ENCODE measurements at regions of chr3 and their contacts with region 1.

Region 1: GRCh38 chr3:62065982-62066693 is 307.2 kb downstream of the FEZF2 start:
- DNase-seq: no peak
- ATAC-seq: no peak
- H3K4me3 ChIP-seq: no peak overlapping the region
- H3K27ac ChIP-seq: no peak overlapping the region
- H3K4me1 ChIP-seq: no peaks in the 10 kb centered on the region
- H3K27me3 ChIP-seq: no peaks in the 10 kb centered on the region
- CTCF ChIP-seq: no peak

Region 2: DNA sequence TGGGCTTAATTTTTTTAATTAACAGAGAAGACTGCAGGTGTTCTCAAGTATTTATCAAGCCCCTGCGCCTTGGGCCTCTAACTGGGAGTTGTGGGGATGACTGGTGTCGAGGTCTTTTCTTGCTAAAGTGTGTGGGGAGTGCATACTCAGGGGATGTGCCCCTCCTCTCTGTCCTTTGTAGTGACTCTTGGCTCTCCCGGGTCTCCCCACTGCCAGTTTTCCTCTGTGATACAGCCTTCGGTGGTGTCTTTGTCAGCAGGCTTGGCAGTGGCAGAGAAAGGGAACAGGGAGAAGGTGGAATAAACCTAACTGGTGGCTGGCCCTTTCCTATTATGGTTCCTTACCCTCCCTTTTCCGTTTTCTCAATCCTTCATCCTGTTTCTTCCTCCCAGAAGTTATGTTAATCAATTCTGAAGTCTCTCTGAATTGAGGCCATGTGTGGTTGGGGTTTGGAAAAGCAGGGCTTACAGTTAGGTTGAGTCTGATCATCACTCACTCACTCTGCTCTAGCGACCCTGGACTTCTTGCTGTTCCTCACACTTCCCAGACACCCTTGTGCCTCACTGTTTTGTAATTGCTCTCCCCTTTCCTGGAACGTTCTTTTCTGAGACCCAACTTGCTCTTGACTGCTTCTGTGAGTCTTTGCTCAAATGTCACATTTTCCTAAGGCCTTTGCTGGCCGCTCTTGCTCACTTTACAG is 346.7 kb before region 1 on chr3:
- CTCF ChIA-PET with region 1: no interaction called
- POLR2A ChIA-PET with region 1: interaction called, 14 read pairs
- in situ Hi-C with region 1: no loop called
- intact Hi-C with region 1: no loop called
- DNase-seq: no peak
- ATAC-seq: no peak
- H3K4me3 ChIP-seq: no peak overlapping the region
- H3K27ac ChIP-seq: no peak overlapping the region
- H3K4me1 ChIP-seq: no peaks in the 10 kb centered on the region
- H3K27me3 ChIP-seq: no peaks in the 10 kb centered on the region
- CTCF ChIP-seq: no peak

Measured in Panc1 (cell line).